ENCODE measurements at regions of chr9 and their contacts with region 1.

Region 1: DNA sequence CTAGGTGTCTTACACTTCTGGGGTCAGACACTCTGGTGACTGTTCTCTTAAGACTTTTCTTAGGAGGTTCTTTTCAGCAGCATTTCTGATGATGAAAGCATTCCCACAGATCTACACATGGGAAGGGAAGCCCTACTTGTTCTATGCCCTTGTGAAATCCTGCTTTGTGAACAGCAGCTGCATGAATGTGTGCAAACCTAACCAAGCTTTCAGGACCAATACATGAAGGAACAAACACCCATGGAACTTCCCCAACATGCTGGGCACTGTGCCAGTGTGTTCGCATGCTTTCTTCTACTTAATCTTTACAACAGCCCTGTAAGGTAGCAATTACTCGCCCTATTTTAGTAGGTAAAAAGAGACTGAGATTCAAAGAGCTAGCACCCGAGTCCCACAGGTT is 439.9 kb upstream of the KLF4 start:
- DNase-seq: peak; percentile 85
- H3K4me3 ChIP-seq: no peak overlapping the region
- H3K27ac ChIP-seq: no peak overlapping the region
- H3K4me1 ChIP-seq: no peaks in the 10 kb centered on the region
- H3K27me3 ChIP-seq: no peaks in the 10 kb centered on the region
- CTCF ChIP-seq: no peak
- EP300 ChIP-seq: no peak
- POLR2A ChIP-seq: no peak

Region 2: DNA sequence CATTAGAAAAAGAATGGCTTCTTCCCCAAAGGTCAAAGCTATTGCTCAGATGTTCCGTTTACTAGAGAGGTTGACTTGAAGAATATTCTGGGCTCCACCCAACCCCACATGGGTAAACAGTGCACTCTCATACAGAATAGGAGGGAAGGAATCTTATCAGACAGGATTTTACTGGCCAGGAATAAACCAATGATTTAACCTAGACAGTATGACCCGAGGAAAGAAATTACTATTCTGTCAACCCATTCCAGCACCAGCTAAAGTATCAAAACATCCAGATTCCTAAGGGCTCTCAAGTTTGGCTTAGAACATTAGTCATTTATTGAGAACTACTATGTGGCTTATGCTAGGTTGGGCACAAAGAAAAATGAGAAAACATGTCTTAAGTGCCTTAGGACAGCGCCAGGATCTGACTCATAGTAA is 53.7 kb after region 1 on chr9:
- intact Hi-C with region 1: loop called (anchors 5 kb)
- DNase-seq: no peak
- H3K4me3 ChIP-seq: no peak overlapping the region
- H3K27ac ChIP-seq: peak overlapping the region in 1 of 4 donors; percentile 40
- H3K4me1 ChIP-seq: no peaks in the 10 kb centered on the region
- H3K27me3 ChIP-seq: no peaks in the 10 kb centered on the region
- CTCF ChIP-seq: no peak
- EP300 ChIP-seq: no peak
- POLR2A ChIP-seq: no peak

Measured in sigmoid colon (tissue), 7 donors.